Posterior vena cava (tissue), 2 donors: ENCODE measurements at regions of chr3 and their contacts with region 1.

Region 1: GRCh38 chr3:184561061-184561912 is at the start of gene EPHB3:
- DNase-seq: peak; percentile 100
- total RNA-seq, gene EPHB3: 6.9 to 10.8 TPM

Region 2: GRCh38 chr3:184496937-184497336 is 64.3 kb before region 1 on chr3:
- intact Hi-C with region 1: no loop called
- DNase-seq: no peak

Region 3: DNA sequence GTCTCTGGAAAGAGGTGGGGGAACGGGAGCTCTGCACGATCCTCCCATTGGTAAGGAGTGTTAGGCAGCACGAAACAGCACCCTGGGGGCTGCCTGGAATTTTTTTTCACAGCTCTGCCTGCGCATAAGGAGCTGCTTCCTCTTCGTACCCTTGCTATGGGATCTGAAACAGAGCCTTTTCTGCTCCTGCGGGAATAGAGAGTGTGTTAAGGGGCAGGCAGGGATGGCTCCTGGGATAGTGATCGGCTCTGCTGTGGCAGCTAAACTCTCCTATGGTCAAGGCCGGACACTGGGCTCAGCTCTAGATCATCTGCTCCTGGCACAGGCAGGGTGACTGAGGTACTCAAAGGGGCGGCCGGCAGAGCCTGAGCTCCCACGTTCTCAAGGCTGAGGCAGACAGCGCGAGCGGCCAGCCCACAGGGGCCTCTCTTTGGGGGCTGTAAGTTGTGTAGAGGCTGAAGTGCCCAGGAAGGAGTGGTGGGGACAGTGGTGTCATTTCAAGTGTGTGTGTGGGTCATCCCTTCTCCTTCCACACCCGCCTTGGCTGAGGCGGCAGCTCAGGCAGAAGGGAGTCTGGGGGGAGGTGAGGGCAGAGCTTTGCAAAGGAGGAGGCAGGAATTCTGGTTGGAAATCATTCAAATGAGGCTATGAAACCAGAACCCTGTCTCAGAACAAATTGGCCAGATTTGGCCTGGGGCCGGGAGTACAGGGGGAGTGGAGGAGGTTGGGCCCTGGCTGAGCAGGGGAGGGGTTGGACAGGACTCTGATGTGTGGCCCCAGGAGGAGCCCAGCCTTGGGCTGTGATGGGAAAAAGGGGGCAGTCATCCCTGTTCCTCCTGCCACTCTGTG is 31.3 kb after region 1 on chr3:
- intact Hi-C with region 1: loop called in 1 of 2 experiments (anchors 1 kb)
- DNase-seq: no peak

Region 4: GRCh38 chr3:184777336-184778004 is 216.2 kb after region 1 on chr3:
- intact Hi-C with region 1: loop called in 1 of 2 experiments (anchors 1 kb)
- DNase-seq: peak; percentile 94